Psoas muscle (tissue), 8 donors: ENCODE measurements at regions of chr9 and their contacts with region 1.

Region 1: DNA sequence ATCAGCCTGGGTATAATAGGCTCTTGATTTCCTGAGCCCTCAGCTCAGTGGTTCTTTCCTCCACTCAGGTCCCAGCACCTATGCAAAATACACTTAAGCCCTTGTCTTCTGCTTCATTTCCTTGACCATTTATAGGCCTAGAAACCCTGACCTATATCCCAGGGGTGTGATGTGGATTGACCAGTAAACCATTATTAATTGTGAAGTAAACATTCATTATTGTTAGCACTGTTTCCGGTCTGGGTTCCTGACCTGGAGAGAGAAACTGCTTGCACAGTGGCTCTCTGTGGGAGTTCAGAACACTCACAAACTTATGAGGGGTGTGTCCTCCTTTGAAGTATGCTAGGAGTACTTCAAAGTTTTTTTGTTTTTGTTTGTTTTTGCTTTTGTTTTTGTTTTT is 19.6 kb upstream of the TOMM5 start:
- DNase-seq: no peak
- ATAC-seq: no peak
- H3K4me3 ChIP-seq: no peak overlapping the region
- H3K27ac ChIP-seq: no peak overlapping the region
- H3K4me1 ChIP-seq: no peaks in the 10 kb centered on the region
- H3K27me3 ChIP-seq: no peaks in the 10 kb centered on the region
- CTCF ChIP-seq: no peak

Region 2: GRCh38 chr9:37496020-37496419 is 115.9 kb before region 1 on chr9:
- intact Hi-C with region 1: no loop called
- DNase-seq: no peak
- ATAC-seq: peak; percentile 26 to 60 (median 32)
- H3K4me3 ChIP-seq: no peak overlapping the region
- H3K27ac ChIP-seq: peak overlapping the region; percentile 51
- H3K4me1 ChIP-seq: peaks cover 9% of the 10 kb centered on the region
- H3K27me3 ChIP-seq: no peaks in the 10 kb centered on the region
- CTCF ChIP-seq: no peak

Region 3: GRCh38 chr9:37645903-37646506 is 34.0 kb after region 1 on chr9:
- intact Hi-C with region 1: loop called in 1 of 2 experiments (anchors 5 kb)
- DNase-seq: no peak
- ATAC-seq: peak in 3 of 4 donors; percentile 68 to 72 (median 72)
- H3K4me3 ChIP-seq: no peak overlapping the region
- H3K27ac ChIP-seq: peak overlapping the region; percentile 57
- H3K4me1 ChIP-seq: peaks cover 14% of the 10 kb centered on the region
- H3K27me3 ChIP-seq: no peaks in the 10 kb centered on the region
- CTCF ChIP-seq: no peak

Region 4: DNA sequence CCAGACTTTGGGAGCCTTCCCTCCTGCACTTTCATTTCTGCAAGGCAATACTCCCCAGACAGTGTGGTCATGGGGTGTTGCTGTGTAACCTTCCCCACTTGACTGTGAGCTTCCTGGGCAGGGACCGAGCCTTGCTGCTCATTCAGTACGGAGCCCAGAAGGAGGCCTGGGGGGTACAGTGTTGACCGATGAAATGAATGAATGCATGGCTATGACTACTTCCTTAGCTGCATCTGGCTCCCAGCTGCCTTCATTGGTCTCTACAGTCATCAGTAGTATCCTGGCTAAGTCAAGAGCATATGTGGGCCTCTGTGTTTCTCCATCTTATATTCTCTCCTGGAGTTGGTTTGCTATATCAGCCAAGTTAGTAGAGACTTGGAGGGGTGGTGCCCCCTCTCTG is 48.7 kb after region 1 on chr9:
- intact Hi-C with region 1: no loop called
- DNase-seq: no peak
- ATAC-seq: no peak
- H3K4me3 ChIP-seq: no peak overlapping the region
- H3K27ac ChIP-seq: no peak overlapping the region
- H3K4me1 ChIP-seq: no peaks in the 10 kb centered on the region
- H3K27me3 ChIP-seq: no peaks in the 10 kb centered on the region
- CTCF ChIP-seq: no peak

Region 5: DNA sequence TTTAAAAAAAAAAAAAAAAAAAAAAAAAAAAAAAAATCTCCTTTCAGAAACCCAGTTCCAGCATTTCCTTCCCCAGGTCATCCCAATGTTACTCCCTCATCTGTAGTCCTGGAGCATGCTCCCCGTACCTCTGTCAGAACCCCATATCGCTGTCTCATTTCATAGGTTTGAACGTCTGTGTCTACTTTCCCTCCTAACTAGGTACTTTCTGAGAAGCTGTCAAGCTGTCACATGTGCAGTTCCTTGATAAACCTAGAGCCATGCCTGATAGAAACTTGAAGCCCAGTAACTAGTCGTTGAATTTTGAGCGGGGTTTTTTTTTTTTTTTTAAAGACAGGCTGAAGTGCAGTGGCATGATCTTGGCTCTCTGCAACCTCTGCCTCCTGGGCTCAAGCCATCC is 157.3 kb after region 1 on chr9:
- intact Hi-C with region 1: loop called in 1 of 2 experiments (anchors 5 kb)
- DNase-seq: no peak
- ATAC-seq: no peak
- H3K4me3 ChIP-seq: no peak overlapping the region
- H3K27ac ChIP-seq: no peak overlapping the region
- H3K4me1 ChIP-seq: no peaks in the 10 kb centered on the region
- H3K27me3 ChIP-seq: no peaks in the 10 kb centered on the region
- CTCF ChIP-seq: no peak